ENCODE measurements at regions of chr6 and their contacts with region 1.

Region 1: DNA sequence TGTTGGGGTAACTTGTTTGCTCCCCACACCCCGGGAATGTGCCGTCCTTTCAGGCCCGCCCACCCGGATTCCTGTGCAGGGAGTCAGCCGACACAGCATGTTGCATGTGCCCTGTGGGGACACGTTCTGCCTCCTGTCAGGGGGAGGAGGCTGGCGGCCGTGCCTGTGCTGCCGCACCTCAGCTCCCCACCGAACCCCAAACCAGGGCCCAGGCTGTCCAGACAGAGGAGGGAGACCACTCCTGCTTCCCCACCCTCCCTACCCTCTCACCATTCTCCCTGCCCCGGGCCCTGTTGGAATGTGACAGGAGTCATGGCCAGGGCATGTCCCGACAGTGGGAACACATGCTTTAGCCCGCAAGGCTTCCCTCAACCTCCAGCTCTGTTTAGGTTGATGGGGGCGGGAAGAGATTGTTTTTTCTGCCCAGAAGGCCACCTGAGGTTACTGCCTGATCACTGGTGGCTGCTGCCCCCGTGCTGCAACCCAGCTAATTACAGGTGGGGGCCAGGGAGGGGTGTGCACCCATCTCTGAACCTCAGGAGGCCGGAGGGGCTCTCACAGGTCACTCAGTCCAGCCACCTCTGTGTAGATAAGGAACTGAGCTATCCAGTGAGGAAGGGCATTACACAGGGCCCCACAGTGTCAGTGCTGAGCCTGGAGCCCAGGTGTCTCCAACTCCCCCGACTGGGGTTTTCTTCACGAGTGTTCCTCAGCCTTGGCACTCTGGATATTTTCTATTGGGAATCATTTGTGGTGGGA is 13.6 kb downstream of the LRRC73 start:
- DNase-seq: peak; percentile 64 to 84
- ATAC-seq: peak; percentile 23
- H3K4me3 ChIP-seq: no peak overlapping the region
- H3K27ac ChIP-seq: no peak overlapping the region
- H3K4me1 ChIP-seq: no peaks in the 10 kb centered on the region
- H3K27me3 ChIP-seq: no peaks in the 10 kb centered on the region

Region 2: DNA sequence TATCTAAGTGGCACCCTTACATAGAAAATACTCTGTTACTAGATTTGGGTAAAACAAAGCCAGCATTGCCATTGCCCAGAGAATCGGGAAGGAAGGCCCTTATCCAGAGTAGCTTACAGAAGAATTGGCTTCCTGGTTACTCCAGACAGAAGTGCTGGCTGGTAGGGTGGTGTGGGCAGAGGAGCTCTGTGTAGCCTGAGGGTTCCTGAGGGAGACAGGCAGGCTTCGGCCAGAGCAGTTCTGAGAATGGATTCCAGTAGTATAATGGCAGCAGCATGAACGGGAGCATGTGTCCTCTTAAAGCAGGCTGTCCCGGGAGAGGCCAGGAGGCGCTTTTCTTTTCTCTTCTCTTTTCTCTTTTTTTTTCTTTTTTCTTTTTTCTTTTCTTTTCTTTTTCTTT is 302.6 kb before region 1 on chr6:
- intact Hi-C with region 1: no loop called
- DNase-seq: peak in 1 of 2 donors; percentile 16
- ATAC-seq: no peak
- H3K4me3 ChIP-seq: no peak overlapping the region
- H3K27ac ChIP-seq: no peak overlapping the region
- H3K4me1 ChIP-seq: no peaks in the 10 kb centered on the region
- H3K27me3 ChIP-seq: no peaks in the 10 kb centered on the region

Region 3: GRCh38 chr6:43436577-43437282 is 59.8 kb before region 1 on chr6:
- intact Hi-C with region 1: no loop called
- DNase-seq: peak in 1 of 2 donors; percentile 66
- ATAC-seq: peak; percentile 49
- H3K4me3 ChIP-seq: no peak overlapping the region
- H3K27ac ChIP-seq: peak overlapping the region in 1 of 2 donors; percentile 4
- H3K4me1 ChIP-seq: peaks cover 0 to 6% of the 10 kb centered on the region in 2 donors
- H3K27me3 ChIP-seq: no peaks in the 10 kb centered on the region

Region 4: DNA sequence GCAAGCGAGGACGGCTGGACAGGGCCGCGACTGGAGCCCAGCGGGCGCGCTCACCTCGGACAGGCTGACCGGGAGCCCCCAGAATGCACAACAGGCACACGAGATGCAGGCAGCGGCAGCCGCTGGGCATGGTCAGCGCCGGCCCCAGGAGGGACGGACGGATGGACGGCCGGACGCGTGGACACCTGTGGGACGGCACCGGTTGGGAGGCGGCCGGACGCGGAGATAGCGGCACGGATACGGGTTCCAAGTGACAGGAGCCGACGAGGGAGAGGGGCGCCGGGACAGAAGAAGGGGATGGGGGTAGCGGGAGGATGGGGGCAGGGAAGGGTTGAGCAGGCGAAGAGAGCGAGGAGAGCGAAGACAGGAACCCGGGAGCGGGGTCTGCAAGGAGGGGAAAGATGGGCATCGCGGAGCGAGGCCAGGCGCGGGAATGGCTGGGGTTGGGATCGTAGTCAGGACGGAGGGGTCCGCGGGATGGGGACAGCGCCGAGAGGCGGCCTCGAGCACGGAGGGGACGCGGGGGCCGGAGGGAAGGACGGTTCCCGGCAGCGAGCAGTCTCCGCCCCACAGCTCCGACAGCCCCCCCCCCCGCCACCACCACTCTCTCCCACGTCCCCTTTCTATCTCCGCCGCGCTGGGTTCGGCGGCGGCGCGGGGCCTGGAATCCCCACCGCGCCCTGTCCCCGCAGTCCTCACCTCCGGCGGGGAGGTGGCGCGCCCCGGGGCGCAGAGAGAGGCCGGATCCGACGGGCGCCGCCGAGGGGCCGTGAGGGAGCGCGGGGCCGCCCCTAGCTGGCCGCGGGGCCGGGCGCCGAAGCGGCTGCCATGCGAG is 41.6 kb before region 1 on chr6:
- intact Hi-C with region 1: loop called in 1 of 2 experiments (anchors 2 kb)
- DNase-seq: peak; percentile 91 to 96
- ATAC-seq: peak; percentile 94
- H3K4me3 ChIP-seq: peak overlapping the region; percentile 30 to 84
- H3K27ac ChIP-seq: no peak overlapping the region
- H3K4me1 ChIP-seq: no peaks in the 10 kb centered on the region
- H3K27me3 ChIP-seq: no peaks in the 10 kb centered on the region

Region 5: GRCh38 chr6:43477235-43478007 is 19.1 kb before region 1 on chr6 and contains the start of gene TJAP1:
- intact Hi-C with region 1: loop called in 1 of 2 experiments (anchors 2 kb)
- DNase-seq: peak; percentile 95 to 99
- ATAC-seq: peak; percentile 99
- H3K4me3 ChIP-seq: peak within 1 kb of the TSS; percentile 72 to 92
- H3K27ac ChIP-seq: peak within 1 kb of the TSS in 1 of 2 donors; percentile 42
- H3K4me1 ChIP-seq: peaks cover 0 to 5% of the 10 kb centered on the region in 2 donors
- H3K27me3 ChIP-seq: no peaks in the 10 kb centered on the region
- total RNA-seq, gene TJAP1: 30.6 to 35.5 TPM

Region 6: DNA sequence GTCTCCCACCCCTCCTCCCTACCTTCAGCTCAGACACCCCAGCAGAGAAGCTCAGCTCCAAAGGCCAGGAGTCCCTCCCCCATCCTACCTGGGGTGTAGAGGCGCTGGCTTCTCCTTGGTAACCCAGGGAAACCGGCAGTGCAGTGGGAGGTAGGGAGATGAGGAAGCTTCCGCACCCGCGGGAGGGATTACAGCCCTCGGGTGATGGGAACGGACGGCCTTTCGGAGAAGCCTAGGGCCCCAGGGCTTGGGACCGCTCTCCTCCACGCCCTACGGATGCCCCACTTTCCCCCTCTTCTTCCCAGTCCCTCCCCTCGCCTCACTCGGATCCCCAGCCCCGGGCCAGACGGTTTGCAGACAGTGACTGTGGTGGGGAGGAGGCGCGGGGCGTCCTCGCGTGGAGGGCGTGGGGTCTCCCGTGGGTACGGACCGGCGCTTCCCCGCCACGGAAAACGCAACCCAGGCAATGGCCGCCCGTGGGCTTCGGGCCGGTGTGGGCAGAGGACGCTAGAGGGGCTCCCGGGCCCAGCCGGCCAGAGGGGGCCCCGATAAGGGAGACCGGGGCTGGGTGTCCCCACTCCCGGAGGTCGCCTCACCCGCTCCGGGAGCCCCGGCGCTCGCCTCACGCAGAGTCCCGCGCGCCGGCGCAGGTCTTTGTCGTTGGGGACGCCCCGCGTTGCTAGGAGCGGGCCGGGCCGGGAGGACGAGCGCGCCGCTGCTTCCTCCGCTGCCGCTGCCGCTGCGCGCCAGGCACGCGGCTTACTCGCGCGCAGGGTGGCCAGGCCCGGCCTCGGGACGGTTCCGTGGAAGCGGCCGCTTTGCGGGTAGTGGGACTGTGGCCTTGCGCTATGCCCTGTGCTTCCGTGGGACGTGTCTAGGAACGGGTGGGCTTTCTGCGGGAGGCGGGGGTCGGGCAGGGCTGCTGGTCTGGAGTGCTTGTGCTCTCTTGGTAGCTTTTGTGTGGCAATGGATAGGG is 800.8 kb after region 1 on chr6:
- intact Hi-C with region 1: no loop called
- DNase-seq: peak in 1 of 2 donors; percentile 80
- ATAC-seq: peak; percentile 59
- H3K4me3 ChIP-seq: no peak overlapping the region
- H3K27ac ChIP-seq: no peak overlapping the region
- H3K4me1 ChIP-seq: no peaks in the 10 kb centered on the region
- H3K27me3 ChIP-seq: no peaks in the 10 kb centered on the region

Measured in aorta (tissue), 5 donors.